PC-9 (cell line): ENCODE measurements at regions of chr17 and their contacts with region 1.

Region 1: GRCh38 chr17:33267260-33267790 is 25.8 kb downstream of the ASIC2 start:
- DNase-seq: peak; percentile 42 to 50
- H3K4me3 ChIP-seq: no peak overlapping the region
- H3K27ac ChIP-seq: no peak overlapping the region
- H3K4me1 ChIP-seq: no peaks in the 10 kb centered on the region
- H3K27me3 ChIP-seq: peaks cover 22% of the 10 kb centered on the region
- CTCF ChIP-seq: no peak

Region 2: GRCh38 chr17:33112763-33113162 is 154.6 kb before region 1 on chr17:
- CTCF ChIA-PET with region 1: no interaction called
- POLR2A ChIA-PET with region 1: no interaction called
- intact Hi-C with region 1: loop called (anchors 1 kb)
- DNase-seq: peak in 1 of 2 experiments; percentile 76
- H3K4me3 ChIP-seq: no peak overlapping the region
- H3K27ac ChIP-seq: no peak overlapping the region
- H3K4me1 ChIP-seq: peaks cover 4% of the 10 kb centered on the region; the same call in 1 of the 2 replicates
- H3K27me3 ChIP-seq: no peaks in the 10 kb centered on the region
- CTCF ChIP-seq: no peak

Region 3: GRCh38 chr17:33241390-33241789 is 25.9 kb before region 1 on chr17:
- CTCF ChIA-PET with region 1: no interaction called
- POLR2A ChIA-PET with region 1: no interaction called
- intact Hi-C with region 1: loop called (anchors 1 kb)
- DNase-seq: peak in 1 of 2 experiments; percentile 37
- H3K4me3 ChIP-seq: no peak overlapping the region
- H3K27ac ChIP-seq: no peak overlapping the region
- H3K4me1 ChIP-seq: no peaks in the 10 kb centered on the region
- H3K27me3 ChIP-seq: peaks cover 29% of the 10 kb centered on the region
- CTCF ChIP-seq: no peak

Region 4: DNA sequence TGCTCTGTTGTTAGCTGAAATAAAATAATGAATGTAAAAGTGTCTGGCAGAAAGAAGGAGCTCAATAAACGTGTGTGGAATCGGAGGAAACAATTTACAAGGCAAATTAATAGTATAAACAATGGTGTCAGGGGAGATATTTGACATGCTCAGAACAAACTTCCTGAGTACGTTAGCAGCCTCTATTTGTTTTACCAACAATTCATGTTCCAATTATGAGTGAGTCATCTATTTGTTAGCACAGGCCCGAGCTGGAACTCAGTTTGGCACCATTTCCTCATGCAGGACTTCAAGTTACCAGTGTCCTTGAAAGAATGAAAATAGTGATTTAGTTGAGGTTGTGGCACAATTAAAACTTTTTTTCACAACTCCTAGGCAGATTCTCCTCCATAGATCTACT is 16.7 kb after region 1 on chr17:
- CTCF ChIA-PET with region 1: no interaction called
- POLR2A ChIA-PET with region 1: no interaction called
- intact Hi-C with region 1: loop called (anchors 2 kb)
- DNase-seq: peak; percentile 31 to 40
- H3K4me3 ChIP-seq: no peak overlapping the region
- H3K27ac ChIP-seq: no peak overlapping the region
- H3K4me1 ChIP-seq: no peaks in the 10 kb centered on the region
- H3K27me3 ChIP-seq: peaks cover 20% of the 10 kb centered on the region; the same call in 1 of the 2 replicates
- CTCF ChIP-seq: no peak